ENCODE measurements at regions of chr14 and their contacts with region 1.

Region 1: GRCh38 chr14:31357279-31357678 is 63.1 kb downstream of the HEATR5A start:
- DNase-seq: no peak
- ATAC-seq: no peak
- H3K4me3 ChIP-seq: no peak overlapping the region
- H3K27ac ChIP-seq: no peak overlapping the region
- H3K4me1 ChIP-seq: peaks cover 0 to 12% (median 0%) of the 10 kb centered on the region in 9 donors
- H3K27me3 ChIP-seq: no peaks in the 10 kb centered on the region
- CTCF ChIP-seq: no peak

Region 2: DNA sequence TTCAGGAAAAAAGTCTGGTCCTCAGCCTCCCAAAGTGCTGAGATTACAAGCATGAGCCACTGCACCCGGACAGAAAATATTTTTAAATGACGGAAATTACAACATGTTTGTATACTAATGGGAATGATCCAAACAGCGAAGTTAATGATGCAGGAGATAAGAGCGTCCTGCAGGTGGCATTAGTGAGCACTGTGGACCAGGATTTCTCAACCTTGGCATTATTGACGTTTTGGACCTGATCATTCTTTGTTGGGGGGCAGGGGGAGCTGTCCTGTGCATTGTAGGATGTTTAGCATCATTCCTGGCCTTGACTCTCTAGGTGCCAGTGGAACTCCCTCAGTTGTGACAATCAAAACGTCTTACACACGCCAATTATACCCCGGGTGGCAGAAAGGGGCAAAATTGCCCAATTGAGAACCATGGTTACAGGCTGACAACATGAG is 701.1 kb before region 1 on chr14:
- intact Hi-C with region 1: loop called in 2 of 10 experiments (anchors 5 to 10 kb)
- DNase-seq: peak in 1 of 2 donors; percentile 12
- ATAC-seq: peak in 3 of 8 donors; percentile 48 to 66 (median 52)
- H3K4me3 ChIP-seq: no peak overlapping the region
- H3K27ac ChIP-seq: no peak overlapping the region
- H3K4me1 ChIP-seq: no peaks in the 10 kb centered on the region
- H3K27me3 ChIP-seq: no peaks in the 10 kb centered on the region
- CTCF ChIP-seq: peak; percentile 41 to 77 (median 71)

Region 3: GRCh38 chr14:30994681-30995620 is 362.3 kb before region 1 on chr14:
- intact Hi-C with region 1: loop called in 1 of 10 experiments (anchors 10 kb)
- DNase-seq: no peak
- ATAC-seq: peak in 7 of 8 donors; percentile 34 to 68 (median 53)
- H3K4me3 ChIP-seq: no peak overlapping the region
- H3K27ac ChIP-seq: peak overlapping the region in 7 of 10 donors; percentile 2 to 63 (median 54)
- H3K4me1 ChIP-seq: peaks cover 0 to 67% (median 43%) of the 10 kb centered on the region in 9 donors
- H3K27me3 ChIP-seq: no peaks in the 10 kb centered on the region
- CTCF ChIP-seq: no peak

Region 4: GRCh38 chr14:31142455-31143087 is 214.7 kb before region 1 on chr14:
- intact Hi-C with region 1: loop called in 3 of 10 experiments (anchors 10 kb)
- DNase-seq: no peak
- ATAC-seq: no peak
- H3K4me3 ChIP-seq: no peak overlapping the region
- H3K27ac ChIP-seq: no peak overlapping the region
- H3K4me1 ChIP-seq: no peaks in the 10 kb centered on the region
- H3K27me3 ChIP-seq: no peaks in the 10 kb centered on the region
- CTCF ChIP-seq: no peak

Region 5: GRCh38 chr14:31207755-31208545 is 149.3 kb before region 1 on chr14 and contains the start of gene HECTD1:
- intact Hi-C with region 1: loop called in 3 of 10 experiments (anchors 2 to 10 kb)
- DNase-seq: peak; percentile 79 to 90
- ATAC-seq: peak; percentile 92 to 97 (median 94)
- H3K4me3 ChIP-seq: peak within 1 kb of the TSS; percentile 68 to 99 (median 92)
- H3K27ac ChIP-seq: peak within 1 kb of the TSS; percentile 93 to 100 (median 99)
- H3K4me1 ChIP-seq: peaks cover 4 to 34% (median 29%) of the 10 kb centered on the region in 9 donors
- H3K27me3 ChIP-seq: no peaks in the 10 kb centered on the region
- CTCF ChIP-seq: peak; percentile 61 to 97 (median 86)
- total RNA-seq, gene HECTD1: 126 to 189 (median 159) TPM

Region 6: GRCh38 chr14:31283578-31284252 is 73.6 kb before region 1 on chr14:
- intact Hi-C with region 1: no loop called
- DNase-seq: no peak
- ATAC-seq: no peak
- H3K4me3 ChIP-seq: no peak overlapping the region
- H3K27ac ChIP-seq: peak overlapping the region in 1 of 10 donors; percentile 62
- H3K4me1 ChIP-seq: peaks cover 0 to 15% (median 0%) of the 10 kb centered on the region in 9 donors
- H3K27me3 ChIP-seq: no peaks in the 10 kb centered on the region
- CTCF ChIP-seq: no peak